ENCODE measurements at regions of chr4 and their contacts with region 1.

Region 1: DNA sequence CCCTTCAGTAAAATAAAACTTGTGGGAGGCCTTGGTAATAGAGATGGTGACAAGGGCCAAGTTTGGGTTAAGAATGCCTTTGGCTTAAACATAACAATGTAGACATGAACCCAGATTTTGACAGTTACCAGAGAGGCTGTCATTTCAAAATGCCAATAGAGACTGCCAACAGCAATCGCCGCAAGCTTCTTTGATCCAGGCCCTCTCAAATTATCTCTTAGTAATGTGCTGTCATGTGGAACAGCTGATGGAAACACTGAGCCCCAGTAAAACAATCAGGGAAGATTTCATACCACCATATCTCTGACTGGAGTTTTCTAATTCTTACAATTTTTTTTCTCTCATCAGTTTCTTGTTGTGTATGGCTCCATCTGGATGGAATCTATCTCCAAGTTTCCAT is 80.5 kb downstream of the ZNF330 start:
- DNase-seq: no peak
- H3K4me3 ChIP-seq: no peak overlapping the region
- H3K27ac ChIP-seq: no peak overlapping the region
- H3K4me1 ChIP-seq: no peaks in the 10 kb centered on the region
- H3K27me3 ChIP-seq: no peaks in the 10 kb centered on the region
- CTCF ChIP-seq: no peak
- POLR2A ChIP-seq: no peak

Region 2: GRCh38 chr4:140330311-140330900 is 970.8 kb before region 1 on chr4:
- intact Hi-C with region 1: loop called (anchors 5 kb)
- DNase-seq: no peak
- H3K4me3 ChIP-seq: no peak overlapping the region
- H3K27ac ChIP-seq: no peak overlapping the region
- H3K4me1 ChIP-seq: no peaks in the 10 kb centered on the region
- H3K27me3 ChIP-seq: no peaks in the 10 kb centered on the region
- CTCF ChIP-seq: peak in 2 of 3 donors; percentile 13 to 15
- POLR2A ChIP-seq: no peak